ENCODE measurements at regions of chr6 and their contacts with region 1.

Region 1: GRCh38 chr6:44655412-44656342 is 268.2 kb downstream of the CDC5L start:
- DNase-seq: peak; percentile 58
- ATAC-seq: peak; percentile 75
- H3K4me3 ChIP-seq: peak overlapping the region; percentile 11; the same call in 1 of the 2 replicates
- H3K27ac ChIP-seq: no peak overlapping the region
- H3K4me1 ChIP-seq: peaks cover 6% of the 10 kb centered on the region
- H3K27me3 ChIP-seq: no peaks in the 10 kb centered on the region
- CTCF ChIP-seq: peak; percentile 97

Region 2: GRCh38 chr6:44730691-44731391 is 75.2 kb after region 1 on chr6:
- CTCF ChIA-PET with region 1: no interaction called
- POLR2A ChIA-PET with region 1: no interaction called
- intact Hi-C with region 1: loop called (anchors 5 kb)
- DNase-seq: peak; percentile 87
- ATAC-seq: peak; percentile 91
- H3K4me3 ChIP-seq: peak overlapping the region; percentile 39; the same call in 1 of the 2 replicates
- H3K27ac ChIP-seq: peak overlapping the region; percentile 84
- H3K4me1 ChIP-seq: peaks cover 30% of the 10 kb centered on the region
- H3K27me3 ChIP-seq: no peaks in the 10 kb centered on the region
- CTCF ChIP-seq: no peak

Region 3: DNA sequence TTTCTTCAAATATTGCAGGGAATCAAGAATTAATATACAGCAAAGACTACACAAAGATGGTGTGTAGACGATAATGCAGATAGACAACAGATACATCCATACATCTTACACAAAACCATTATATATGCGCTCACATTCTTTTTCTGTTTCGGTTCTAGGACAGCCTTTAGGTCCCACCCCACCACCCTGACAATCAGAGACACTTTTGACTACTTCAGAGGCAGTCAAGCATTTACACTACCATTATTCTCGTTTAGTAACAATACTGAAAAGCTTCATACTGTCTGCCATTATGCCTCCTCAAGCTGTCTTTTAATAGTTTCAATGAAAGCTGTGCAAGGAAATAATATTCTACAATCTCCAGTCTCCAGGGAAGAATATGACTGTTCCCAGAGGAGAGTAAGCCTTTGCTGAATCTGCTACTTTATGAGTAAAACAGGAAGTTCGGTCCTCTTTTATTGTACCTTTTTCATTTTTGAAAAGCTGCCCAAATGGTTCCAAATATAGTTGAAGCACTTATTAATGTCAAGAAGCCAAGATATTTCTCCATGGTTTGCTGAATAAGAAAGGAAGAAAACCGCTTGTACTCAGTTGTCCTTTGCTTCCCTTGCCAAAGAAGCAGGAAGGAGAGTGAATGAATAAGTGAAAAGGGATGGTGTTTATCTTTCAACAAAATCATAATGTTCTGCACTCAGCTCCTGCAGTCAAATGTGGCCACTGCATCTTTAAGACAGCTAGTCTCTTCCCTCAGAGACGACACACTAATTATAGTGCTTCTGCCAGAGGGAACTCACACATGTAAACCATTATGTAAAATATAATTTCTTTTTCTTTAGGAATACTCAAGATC is 200.1 kb after region 1 on chr6:
- CTCF ChIA-PET with region 1: no interaction called
- POLR2A ChIA-PET with region 1: no interaction called
- intact Hi-C with region 1: loop called (anchors 10 kb)
- DNase-seq: no peak
- ATAC-seq: no peak
- H3K4me3 ChIP-seq: no peak overlapping the region
- H3K27ac ChIP-seq: no peak overlapping the region
- H3K4me1 ChIP-seq: no peaks in the 10 kb centered on the region
- H3K27me3 ChIP-seq: no peaks in the 10 kb centered on the region
- CTCF ChIP-seq: no peak

Region 4: DNA sequence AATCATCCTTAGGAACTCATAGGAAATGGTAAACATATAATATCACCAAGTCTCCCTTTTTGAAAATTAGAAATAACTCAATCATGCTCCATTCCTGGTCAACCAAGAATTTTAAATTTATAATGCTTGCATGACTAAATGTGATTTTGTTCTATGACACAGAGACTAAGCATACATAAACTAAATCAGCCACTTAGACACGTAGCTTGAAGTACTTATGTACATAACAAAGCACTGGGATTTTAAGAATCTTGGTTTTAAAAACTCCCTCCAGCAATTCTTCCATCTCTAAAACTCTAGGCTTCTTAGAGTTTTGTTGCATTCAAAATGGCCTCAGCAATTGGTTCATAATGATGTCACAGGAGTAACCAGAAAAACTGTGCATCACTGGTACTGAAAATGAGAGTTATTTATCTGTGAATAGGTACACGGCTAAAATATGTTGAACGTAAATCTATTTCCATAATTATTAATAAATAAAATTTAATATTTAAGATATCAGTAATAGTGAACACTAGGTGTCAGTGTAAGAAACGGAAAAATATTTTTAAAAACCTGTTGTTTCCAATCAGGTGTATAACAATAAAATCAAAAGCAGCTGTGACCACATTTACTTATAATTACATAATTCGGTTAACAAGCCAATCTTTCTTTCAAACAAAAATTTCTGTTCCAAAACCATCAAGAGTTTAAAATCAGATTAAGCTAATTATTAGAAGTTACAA is 430.8 kb after region 1 on chr6:
- CTCF ChIA-PET with region 1: no interaction called
- POLR2A ChIA-PET with region 1: no interaction called
- intact Hi-C with region 1: loop called (anchors 10 kb)
- DNase-seq: peak; percentile 37
- ATAC-seq: no peak
- H3K4me3 ChIP-seq: no peak overlapping the region
- H3K27ac ChIP-seq: no peak overlapping the region
- H3K4me1 ChIP-seq: no peaks in the 10 kb centered on the region
- H3K27me3 ChIP-seq: no peaks in the 10 kb centered on the region
- CTCF ChIP-seq: 0 out of 2 replicates have a peak, but pooled peaks have one; percentile 19

Measured in PC-3 (cell line).